KBM-7 (cell line): ENCODE measurements at regions of chr11 and their contacts with region 1.

Region 1: DNA sequence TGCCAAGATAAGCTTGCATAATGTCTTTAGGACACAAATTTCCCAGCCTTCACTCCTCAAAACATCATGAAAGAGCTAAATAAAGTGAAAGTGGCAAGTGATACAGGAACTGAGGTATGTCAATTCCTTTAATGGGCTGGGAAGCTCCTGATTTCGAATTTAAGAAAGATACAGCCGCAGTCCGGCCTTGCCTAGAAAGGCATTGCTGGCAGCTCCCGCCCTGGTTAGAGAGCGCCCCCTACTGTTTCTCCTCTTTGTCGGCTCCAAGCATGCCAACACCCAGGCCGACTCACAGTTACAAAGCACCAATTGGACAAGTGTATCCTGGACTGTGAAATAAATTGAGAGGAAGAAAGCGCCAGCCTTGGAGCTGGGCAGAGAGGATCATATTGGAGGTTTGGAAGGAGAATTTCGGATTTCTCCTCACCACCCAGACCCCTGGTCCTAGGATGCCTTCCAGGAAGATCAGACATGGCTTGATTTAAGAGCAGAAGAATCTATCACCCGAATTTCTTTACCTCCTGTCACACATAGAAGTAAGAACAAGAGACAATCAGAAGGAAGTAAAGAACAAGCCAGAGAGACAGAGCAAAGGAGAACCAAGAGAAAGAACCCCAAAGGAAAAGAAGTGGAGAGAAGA is 84.0 kb downstream of the FAM76B start:
- DNase-seq: peak; percentile 84

Region 2: GRCh38 chr11:95147364-95147905 is 558.2 kb before region 1 on chr11:
- in situ Hi-C with region 1: loop called (anchors 10 kb)
- DNase-seq: peak; percentile 48